ENCODE measurements at regions of chr2 and their contacts with region 1.

Region 1: DNA sequence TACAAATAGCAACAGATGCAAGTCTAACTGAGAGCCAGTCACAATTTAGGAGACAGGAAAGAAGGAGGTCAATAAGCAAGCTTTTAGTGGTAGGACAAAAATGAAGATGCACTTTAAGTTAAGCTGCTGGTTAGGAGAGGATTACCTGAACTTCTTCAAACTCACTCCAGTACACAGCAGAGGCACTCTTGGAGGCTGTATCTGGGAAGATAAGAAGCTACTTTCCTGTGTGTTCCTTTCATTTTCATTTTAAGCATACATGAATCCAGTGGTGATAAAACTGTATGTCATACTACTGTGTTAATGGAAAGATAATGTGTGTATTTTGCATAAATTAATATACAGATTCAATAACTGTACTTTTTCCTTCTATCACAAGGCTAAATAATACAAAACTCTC is 49.6 kb downstream of the HYCC2 start:
- DNase-seq: no peak
- ATAC-seq: no peak
- H3K4me3 ChIP-seq: no peak overlapping the region
- H3K4me3 Mint-ChIP-seq: peak overlapping the region in 1 of 10 donors; percentile 42
- H3K27ac ChIP-seq: no peak overlapping the region
- H3K27ac Mint-ChIP-seq: peak overlapping the region in 1 of 9 donors; percentile 6
- H3K4me1 ChIP-seq: no peaks in the 10 kb centered on the region
- H3K4me1 Mint-ChIP-seq: peaks cover 10 to 34% (median 21%) of the 10 kb centered on the region in 7 donors
- H3K27me3 ChIP-seq: no peaks in the 10 kb centered on the region
- H3K27me3 Mint-ChIP-seq: no peaks in the 10 kb centered on the region

Region 2: DNA sequence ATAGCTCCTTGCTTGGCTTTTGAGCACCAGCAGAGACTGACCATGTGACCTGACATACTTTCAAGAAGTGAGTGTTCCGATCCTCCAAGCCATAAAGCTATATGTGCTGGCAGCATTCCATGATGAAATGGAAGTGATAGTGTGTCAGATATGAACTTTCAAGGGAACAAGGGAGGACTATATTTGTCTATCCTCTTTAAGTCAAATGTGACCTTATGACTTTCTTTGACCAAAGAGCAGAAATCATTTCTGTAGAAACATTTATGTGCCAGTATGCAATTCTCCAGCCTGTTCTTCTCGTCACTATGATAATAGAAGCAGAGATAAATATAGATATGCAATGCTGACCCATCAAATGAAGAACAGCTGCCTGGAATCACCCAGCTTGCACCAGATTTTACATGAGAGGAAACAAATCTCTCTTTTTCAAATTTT is 35.2 kb after region 1 on chr2:
- CTCF ChIA-PET with region 1: no interaction called
- POLR2A ChIA-PET with region 1: no interaction called
- intact Hi-C with region 1: loop called in 1 of 2 experiments (anchors 5 kb)
- DNase-seq: no peak
- ATAC-seq: no peak
- H3K4me3 ChIP-seq: no peak overlapping the region
- H3K4me3 Mint-ChIP-seq: no peak overlapping the region
- H3K27ac ChIP-seq: no peak overlapping the region
- H3K27ac Mint-ChIP-seq: peak overlapping the region in 3 of 9 donors; percentile 30 to 75 (median 56)
- H3K4me1 ChIP-seq: no peaks in the 10 kb centered on the region
- H3K4me1 Mint-ChIP-seq: peaks cover 28 to 47% (median 38%) of the 10 kb centered on the region in 7 donors
- H3K27me3 ChIP-seq: no peaks in the 10 kb centered on the region
- H3K27me3 Mint-ChIP-seq: no peaks in the 10 kb centered on the region

Region 3: DNA sequence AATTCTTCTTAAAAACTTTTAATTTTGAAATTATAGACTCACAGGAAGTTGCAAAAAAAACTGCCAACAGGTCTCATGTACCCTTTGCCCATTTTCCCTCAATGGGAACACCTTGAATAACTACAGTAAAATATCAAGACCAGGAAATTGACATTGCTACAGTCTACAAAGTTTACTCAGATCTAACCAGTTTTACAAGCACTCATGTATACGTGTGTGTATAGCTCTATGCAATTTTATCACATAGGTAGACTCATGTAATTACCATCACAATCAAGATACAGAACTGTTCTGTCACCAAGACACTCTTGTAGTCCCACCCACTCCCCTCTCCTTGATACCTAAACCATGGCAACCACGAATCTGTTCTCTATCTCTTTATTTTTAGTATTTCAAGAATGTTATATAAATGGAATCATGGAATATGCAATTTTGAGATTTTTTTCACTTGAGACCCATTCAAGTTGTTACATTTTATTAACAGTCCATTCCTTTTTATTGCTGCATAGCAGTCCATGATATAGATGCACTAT is 42.9 kb after region 1 on chr2:
- CTCF ChIA-PET with region 1: interaction called, 6 read pairs
- POLR2A ChIA-PET with region 1: interaction called, 4 read pairs
- intact Hi-C with region 1: loop called in 1 of 2 experiments (anchors 5 kb)
- DNase-seq: no peak
- ATAC-seq: no peak
- H3K4me3 ChIP-seq: no peak overlapping the region
- H3K4me3 Mint-ChIP-seq: no peak overlapping the region
- H3K27ac ChIP-seq: no peak overlapping the region
- H3K27ac Mint-ChIP-seq: peak overlapping the region in 3 of 9 donors; percentile 13 to 72 (median 20)
- H3K4me1 ChIP-seq: peaks cover 15 to 23% of the 10 kb centered on the region in 2 donors
- H3K4me1 Mint-ChIP-seq: peaks cover 30 to 64% (median 56%) of the 10 kb centered on the region in 7 donors
- H3K27me3 ChIP-seq: no peaks in the 10 kb centered on the region
- H3K27me3 Mint-ChIP-seq: no peaks in the 10 kb centered on the region

Region 4: GRCh38 chr2:201484805-201485204 is 462.9 kb after region 1 on chr2:
- CTCF ChIA-PET with region 1: no interaction called
- POLR2A ChIA-PET with region 1: no interaction called
- intact Hi-C with region 1: no loop called
- DNase-seq: no peak
- ATAC-seq: no peak
- H3K4me3 ChIP-seq: no peak overlapping the region
- H3K4me3 Mint-ChIP-seq: no peak overlapping the region
- H3K27ac ChIP-seq: no peak overlapping the region
- H3K27ac Mint-ChIP-seq: no peak overlapping the region
- H3K4me1 ChIP-seq: no peaks in the 10 kb centered on the region
- H3K4me1 Mint-ChIP-seq: peaks cover 0 to 4% (median 0%) of the 10 kb centered on the region in 7 donors
- H3K27me3 ChIP-seq: no peaks in the 10 kb centered on the region
- H3K27me3 Mint-ChIP-seq: peaks cover 0 to 10% (median 0%) of the 10 kb centered on the region in 5 donors

Region 5: GRCh38 chr2:202109737-202110184 is 1087.8 kb after region 1 on chr2:
- CTCF ChIA-PET with region 1: no interaction called
- POLR2A ChIA-PET with region 1: no interaction called
- intact Hi-C with region 1: no loop called
- DNase-seq: no peak
- ATAC-seq: no peak
- H3K4me3 ChIP-seq: no peak overlapping the region
- H3K4me3 Mint-ChIP-seq: no peak overlapping the region
- H3K27ac ChIP-seq: no peak overlapping the region
- H3K27ac Mint-ChIP-seq: no peak overlapping the region
- H3K4me1 ChIP-seq: no peaks in the 10 kb centered on the region
- H3K4me1 Mint-ChIP-seq: no peaks in the 10 kb centered on the region
- H3K27me3 ChIP-seq: no peaks in the 10 kb centered on the region
- H3K27me3 Mint-ChIP-seq: peaks cover 14 to 19% (median 16%) of the 10 kb centered on the region in 5 donors

Measured in naive thymus-derived CD4-positive, alpha-beta T cell (primary cell).